PC-3 (cell line): ENCODE measurements at regions of chr2 and their contacts with region 1.

Region 1: DNA sequence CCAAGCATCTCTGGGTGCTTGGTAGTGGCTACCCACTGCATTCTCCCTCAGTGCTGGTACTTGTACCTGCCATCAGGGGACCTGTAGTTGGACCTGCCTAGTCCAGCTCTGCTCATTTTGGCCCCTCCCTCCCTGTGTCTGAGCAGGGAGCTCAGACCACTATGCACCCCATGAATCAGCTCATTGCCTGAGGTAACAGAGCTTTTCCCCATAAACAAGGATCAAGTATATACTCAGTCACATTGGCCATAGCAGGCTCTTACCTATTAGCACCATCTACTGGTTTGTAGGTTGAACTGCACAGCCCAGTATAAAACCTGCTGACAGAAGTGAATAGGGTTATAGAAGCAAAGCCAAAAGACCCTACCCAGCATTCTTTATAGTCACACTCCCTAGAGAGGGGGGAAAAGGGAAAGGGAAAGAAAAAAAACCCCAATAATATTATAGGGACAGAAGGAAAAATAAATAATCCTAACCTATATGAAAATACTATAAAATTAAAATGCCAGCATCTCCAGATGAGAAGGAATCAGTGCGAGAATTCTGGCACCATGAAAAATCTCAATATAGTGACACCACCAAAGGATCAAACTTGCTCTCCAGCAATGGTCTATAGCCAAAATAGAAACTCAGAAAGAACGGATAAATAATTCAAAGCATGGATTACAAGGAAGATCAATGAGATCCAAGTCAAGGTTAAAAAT is 6.9 kb upstream of the FLACC1 start:
- DNase-seq: peak; percentile 84
- ATAC-seq: peak; percentile 86
- H3K4me3 ChIP-seq: no peak overlapping the region
- H3K27ac ChIP-seq: no peak overlapping the region
- H3K4me1 ChIP-seq: peaks cover 10% of the 10 kb centered on the region
- H3K27me3 ChIP-seq: no peaks in the 10 kb centered on the region
- CTCF ChIP-seq: peak; percentile 95

Region 2: DNA sequence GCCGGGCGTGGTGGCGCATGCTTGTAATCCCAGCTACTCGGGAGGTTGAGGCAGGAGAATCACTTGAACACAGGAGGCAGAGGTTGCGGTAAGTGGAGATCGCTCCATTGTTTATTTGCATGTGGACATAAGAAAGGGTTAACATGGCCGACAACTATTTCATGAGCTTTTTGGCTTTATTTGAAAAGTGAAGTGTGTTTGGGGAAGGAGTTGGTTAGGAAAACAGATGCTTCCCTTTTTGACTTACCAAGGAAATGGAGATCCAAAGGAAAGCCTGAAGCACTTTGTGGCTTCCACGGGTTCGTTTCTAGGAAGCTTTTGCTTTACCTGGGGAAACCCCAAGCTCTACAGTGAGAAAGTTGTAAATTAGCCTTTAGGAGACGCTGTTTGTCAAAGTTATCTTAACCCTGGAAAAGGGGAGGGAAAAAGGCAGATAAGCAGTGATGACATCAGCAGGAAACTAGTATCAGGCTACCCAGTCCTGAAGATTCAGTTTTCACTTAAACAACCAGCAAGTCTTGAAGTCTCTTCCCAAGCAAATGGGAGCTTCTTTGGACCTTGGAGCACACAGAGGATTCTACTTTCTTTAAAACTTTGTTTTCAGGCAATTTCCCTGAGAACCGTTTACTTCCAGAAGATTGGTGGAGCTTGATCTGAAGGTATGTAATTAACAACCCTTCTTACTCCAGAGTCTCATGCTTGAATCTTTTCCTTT is 181.2 kb before region 1 on chr2 and contains the start of gene CASP10:
- CTCF ChIA-PET with region 1: no interaction called
- POLR2A ChIA-PET with region 1: no interaction called
- intact Hi-C with region 1: loop called (anchors 5 kb)
- DNase-seq: peak; percentile 64
- ATAC-seq: peak; percentile 81
- H3K4me3 ChIP-seq: peak within 1 kb of the TSS; percentile 54
- H3K27ac ChIP-seq: no peak within 1 kb of the TSS
- H3K4me1 ChIP-seq: no peaks in the 10 kb centered on the region
- H3K27me3 ChIP-seq: no peaks in the 10 kb centered on the region
- CTCF ChIP-seq: peak; percentile 63
- total RNA-seq, gene CASP10: 1.3 and 4.2 TPM in 2 replicates

Region 3: DNA sequence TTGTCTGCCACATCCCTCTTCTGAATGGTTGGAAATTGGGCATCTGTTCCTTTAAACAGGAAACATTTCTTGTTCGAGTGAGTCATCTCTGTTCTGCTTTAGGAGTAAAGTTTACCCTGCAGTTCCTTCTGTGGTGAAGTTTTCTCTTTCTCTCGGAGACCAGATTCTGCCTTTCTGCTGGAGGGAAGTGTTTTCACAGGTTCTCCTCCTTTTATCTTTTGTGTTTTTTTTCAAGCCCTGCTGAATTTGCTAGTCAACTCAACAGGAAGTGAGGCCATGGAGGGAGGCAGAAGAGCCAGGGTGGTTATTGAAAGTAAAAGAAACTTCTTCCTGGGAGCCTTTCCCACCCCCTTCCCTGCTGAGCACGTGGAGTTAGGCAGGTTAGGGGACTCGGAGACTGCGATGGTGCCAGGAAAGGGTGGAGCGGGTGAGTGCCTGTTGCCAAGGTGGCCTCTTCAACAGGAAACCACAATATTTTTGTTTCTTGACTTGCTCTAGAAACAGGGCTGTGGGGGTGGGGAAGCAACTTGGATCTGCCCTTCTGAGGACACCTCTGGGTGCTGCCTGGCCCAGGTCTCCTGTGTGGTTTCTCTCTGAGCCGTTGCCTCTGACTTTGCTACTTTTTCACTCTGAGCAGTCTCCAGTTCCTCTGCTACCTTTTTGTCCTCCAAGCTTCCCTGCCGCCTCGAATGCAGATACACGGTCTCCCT is 105.9 kb before region 1 on chr2:
- CTCF ChIA-PET with region 1: no interaction called
- POLR2A ChIA-PET with region 1: no interaction called
- intact Hi-C with region 1: loop called (anchors 1 kb)
- DNase-seq: peak; percentile 90
- ATAC-seq: peak; percentile 80
- H3K4me3 ChIP-seq: peak overlapping the region; percentile 81
- H3K27ac ChIP-seq: peak overlapping the region; percentile 95
- H3K4me1 ChIP-seq: peaks cover 30% of the 10 kb centered on the region
- H3K27me3 ChIP-seq: no peaks in the 10 kb centered on the region
- CTCF ChIP-seq: 0 out of 2 replicates have a peak, but pooled peaks have one; percentile 21

Region 4: DNA sequence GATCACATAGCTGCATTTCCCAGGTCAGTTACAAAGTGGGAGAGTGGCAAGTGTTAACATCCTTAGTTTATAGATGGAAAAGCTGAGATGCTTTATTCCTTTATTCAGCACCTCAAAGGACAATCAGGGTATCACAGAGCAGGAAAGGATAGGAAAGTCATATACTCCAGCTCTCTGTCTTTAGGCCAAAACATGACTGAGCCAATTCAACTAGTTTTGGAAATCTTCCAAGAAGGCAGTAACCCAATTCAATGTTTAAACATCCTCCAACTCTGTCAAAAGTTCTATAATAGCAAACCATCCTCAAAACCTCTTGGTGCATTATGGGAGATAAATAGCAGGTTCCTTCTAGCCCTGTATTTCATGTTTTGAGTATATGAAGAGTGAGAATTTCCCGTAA is 78.5 kb before region 1 on chr2:
- CTCF ChIA-PET with region 1: no interaction called
- POLR2A ChIA-PET with region 1: no interaction called
- intact Hi-C with region 1: no loop called
- DNase-seq: no peak
- ATAC-seq: no peak
- H3K4me3 ChIP-seq: no peak overlapping the region
- H3K27ac ChIP-seq: no peak overlapping the region
- H3K4me1 ChIP-seq: no peaks in the 10 kb centered on the region
- H3K27me3 ChIP-seq: no peaks in the 10 kb centered on the region
- CTCF ChIP-seq: no peak

Region 5: GRCh38 chr2:201414099-201415023 is 50.4 kb after region 1 on chr2:
- CTCF ChIA-PET with region 1: no interaction called
- POLR2A ChIA-PET with region 1: no interaction called
- intact Hi-C with region 1: no loop called
- DNase-seq: no peak
- ATAC-seq: no peak
- H3K4me3 ChIP-seq: no peak overlapping the region
- H3K27ac ChIP-seq: no peak overlapping the region
- H3K4me1 ChIP-seq: peaks cover 10% of the 10 kb centered on the region
- H3K27me3 ChIP-seq: no peaks in the 10 kb centered on the region
- CTCF ChIP-seq: no peak

Region 6: GRCh38 chr2:201466050-201466675 is 102.2 kb after region 1 on chr2:
- CTCF ChIA-PET with region 1: no interaction called
- POLR2A ChIA-PET with region 1: no interaction called
- intact Hi-C with region 1: no loop called
- DNase-seq: peak; percentile 80
- ATAC-seq: peak; percentile 85
- H3K4me3 ChIP-seq: peak overlapping the region; percentile 45
- H3K27ac ChIP-seq: peak overlapping the region; percentile 85
- H3K4me1 ChIP-seq: peaks cover 46% of the 10 kb centered on the region
- H3K27me3 ChIP-seq: no peaks in the 10 kb centered on the region
- CTCF ChIP-seq: no peak